A673 (cell line): ENCODE measurements at regions of chr14 and their contacts with region 1.

Region 1: GRCh38 chr14:68795597-68796417 is 2.9 kb upstream of the ZFP36L1 start:
- DNase-seq: peak; percentile 69
- H3K4me3 ChIP-seq: peak overlapping the region; percentile 74
- H3K27ac ChIP-seq: peak overlapping the region; percentile 97
- H3K4me1 ChIP-seq: peaks cover 16% of the 10 kb centered on the region
- H3K27me3 ChIP-seq: no peaks in the 10 kb centered on the region
- CTCF ChIP-seq: peak; percentile 58

Region 2: DNA sequence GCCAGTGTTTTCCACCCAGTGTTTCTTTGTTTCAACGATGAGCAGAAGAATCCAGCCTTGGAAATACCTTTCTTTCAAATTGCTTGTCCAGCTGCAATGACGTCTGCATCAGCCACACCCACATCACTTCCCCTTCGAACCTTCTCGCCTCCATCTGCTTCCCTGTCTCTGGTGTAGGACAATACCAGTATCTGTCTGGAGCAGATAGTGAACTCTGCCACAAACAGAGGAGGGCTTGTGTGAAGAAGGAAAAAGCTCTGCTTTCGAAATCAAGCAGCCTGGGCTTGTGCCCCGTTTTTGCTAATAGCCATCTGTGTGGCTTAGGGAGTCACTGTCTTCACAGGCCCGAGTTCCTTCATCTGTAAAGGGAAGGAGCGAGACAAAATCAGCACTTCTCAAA is 418.3 kb before region 1 on chr14:
- CTCF ChIA-PET with region 1: no interaction called
- POLR2A ChIA-PET with region 1: interaction called, 4 read pairs
- intact Hi-C with region 1: loop called (anchors 10 kb)
- DNase-seq: no peak
- H3K4me3 ChIP-seq: no peak overlapping the region
- H3K27ac ChIP-seq: no peak overlapping the region
- H3K4me1 ChIP-seq: peaks cover 12% of the 10 kb centered on the region
- H3K27me3 ChIP-seq: no peaks in the 10 kb centered on the region
- CTCF ChIP-seq: no peak

Region 3: DNA sequence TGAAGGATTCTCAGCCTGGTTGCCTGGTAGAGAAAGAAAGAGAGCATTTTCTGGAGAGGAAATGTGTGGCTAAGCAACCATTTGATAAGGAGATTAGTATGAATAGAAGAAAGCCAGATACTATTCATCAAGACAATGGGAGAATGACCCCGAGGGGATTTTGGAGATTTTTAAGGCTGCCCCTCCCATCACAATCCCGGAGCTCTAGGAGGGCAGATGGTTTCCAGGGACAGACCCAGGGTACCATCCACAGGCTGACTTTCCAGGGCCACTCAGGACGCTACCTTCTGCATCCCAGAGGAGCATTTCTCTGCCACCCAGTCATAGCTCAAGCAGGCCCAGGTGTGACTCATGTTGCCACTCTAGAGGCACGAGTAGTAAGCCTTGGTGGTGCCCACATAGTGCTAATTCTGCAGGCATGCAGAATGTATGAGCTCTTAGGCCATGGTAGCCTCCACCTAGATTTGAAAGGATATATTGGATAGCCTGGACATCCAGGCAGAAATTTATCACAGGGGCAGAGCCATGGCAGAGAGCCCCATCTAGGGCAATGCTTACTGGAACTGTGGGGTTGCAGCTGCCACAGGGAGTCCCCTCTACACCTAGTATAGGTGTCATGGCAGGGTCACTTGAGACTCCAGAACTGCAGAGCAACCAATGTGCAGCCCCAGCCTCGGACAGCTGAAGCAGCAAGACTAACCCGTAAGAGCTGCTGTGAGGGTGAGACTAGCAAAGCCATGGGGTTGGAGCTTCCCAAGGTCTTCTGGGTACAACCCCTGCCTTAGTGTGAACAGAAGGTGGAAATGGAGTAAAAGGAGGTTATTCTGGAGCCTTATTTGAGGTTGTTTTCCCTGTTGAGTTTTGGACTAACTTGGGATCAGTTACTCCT is 368.9 kb before region 1 on chr14:
- CTCF ChIA-PET with region 1: no interaction called
- POLR2A ChIA-PET with region 1: interaction called, 16 read pairs
- intact Hi-C with region 1: no loop called
- DNase-seq: no peak
- H3K4me3 ChIP-seq: no peak overlapping the region
- H3K27ac ChIP-seq: no peak overlapping the region
- H3K4me1 ChIP-seq: no peaks in the 10 kb centered on the region
- H3K27me3 ChIP-seq: no peaks in the 10 kb centered on the region
- CTCF ChIP-seq: no peak

Region 4: DNA sequence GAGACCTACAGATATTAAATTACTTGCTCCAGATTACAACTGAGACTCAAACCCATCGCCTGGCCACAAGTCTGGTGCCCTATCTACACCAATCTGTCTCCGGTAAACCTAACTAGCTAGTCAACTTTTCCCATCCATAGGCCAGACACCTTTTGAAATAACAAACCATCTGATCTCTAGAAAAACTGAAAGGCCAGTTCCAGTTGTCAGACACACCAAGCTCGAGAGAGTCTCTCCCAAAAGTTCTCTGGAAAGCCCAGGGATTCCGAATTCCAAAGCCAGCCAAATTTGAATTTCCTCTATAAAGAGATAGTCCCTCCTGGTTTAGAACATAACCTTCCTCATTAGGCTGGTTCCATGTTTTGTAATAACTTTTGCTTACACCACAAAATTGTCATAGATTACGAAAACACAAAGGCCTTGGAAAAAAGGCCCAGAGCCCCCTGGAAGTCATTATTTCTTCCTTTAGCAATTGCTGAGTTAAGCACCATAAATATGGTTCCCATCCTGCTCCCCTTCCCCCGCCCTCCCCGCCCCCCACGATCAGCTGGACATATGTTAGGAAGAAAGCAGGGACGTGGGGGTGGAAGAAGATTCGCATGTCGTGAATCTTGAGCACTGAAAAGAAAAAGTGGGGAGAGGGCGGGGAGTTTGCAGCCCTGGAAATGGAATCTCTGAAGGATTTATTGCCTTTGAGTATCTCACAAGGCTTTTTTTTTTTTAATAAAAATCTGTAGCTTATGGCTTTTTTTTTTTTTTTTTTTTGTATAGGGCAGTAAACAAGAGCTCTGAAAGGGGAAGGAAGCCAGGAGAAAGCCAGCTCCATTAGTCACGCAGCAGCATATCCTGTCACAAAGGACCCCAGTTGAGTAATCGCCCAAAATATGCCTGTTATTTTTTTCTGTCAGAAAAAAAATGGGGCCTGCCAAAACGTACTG is 113.4 kb before region 1 on chr14:
- CTCF ChIA-PET with region 1: no interaction called
- POLR2A ChIA-PET with region 1: interaction called, 9 read pairs
- intact Hi-C with region 1: loop called (anchors 5 kb)
- DNase-seq: peak; percentile 98
- H3K4me3 ChIP-seq: no peak overlapping the region
- H3K27ac ChIP-seq: peak overlapping the region; percentile 99
- H3K4me1 ChIP-seq: peaks cover 51% of the 10 kb centered on the region
- H3K27me3 ChIP-seq: no peaks in the 10 kb centered on the region
- CTCF ChIP-seq: no peak

Region 5: DNA sequence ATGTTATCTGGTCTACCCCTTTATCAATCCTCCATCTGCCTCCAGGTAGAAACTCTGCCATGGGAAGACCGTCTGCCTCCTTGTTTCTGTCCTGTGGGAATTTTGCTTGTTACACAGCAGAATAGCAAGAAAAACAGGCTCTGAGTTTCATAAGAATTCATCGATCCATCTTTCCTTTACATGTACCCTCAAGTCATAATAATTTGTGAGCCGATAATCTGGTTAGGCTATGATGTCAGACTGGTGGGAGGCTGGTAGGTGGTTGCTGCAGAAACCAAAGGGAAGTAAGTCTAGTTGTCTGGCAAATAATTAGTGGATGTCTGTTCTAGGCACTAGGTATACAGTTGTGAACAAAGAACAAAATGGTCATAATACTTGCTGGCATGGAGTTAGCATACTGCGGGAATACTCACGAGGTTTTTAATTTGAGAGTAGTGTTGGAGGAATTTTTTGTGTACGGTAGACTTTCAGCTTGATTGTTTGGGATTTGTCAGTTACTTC is 824.4 kb after region 1 on chr14:
- CTCF ChIA-PET with region 1: no interaction called
- POLR2A ChIA-PET with region 1: interaction called, 14 read pairs
- intact Hi-C with region 1: no loop called
- DNase-seq: no peak
- H3K4me3 ChIP-seq: no peak overlapping the region
- H3K27ac ChIP-seq: no peak overlapping the region
- H3K4me1 ChIP-seq: peaks cover 17% of the 10 kb centered on the region
- H3K27me3 ChIP-seq: no peaks in the 10 kb centered on the region
- CTCF ChIP-seq: no peak